ENCODE measurements at regions of chr4 and their contacts with region 1.

Region 1: GRCh38 chr4:74874753-74875367 is 58.1 kb upstream of the PARM1 start:
- DNase-seq: peak; percentile 79
- ATAC-seq: peak; percentile 80
- H3K4me3 ChIP-seq: no peak overlapping the region
- H3K4me3 Mint-ChIP-seq: no peak overlapping the region
- H3K27ac ChIP-seq: no peak overlapping the region
- H3K27ac Mint-ChIP-seq: no peak overlapping the region
- H3K4me1 ChIP-seq: peaks cover 5 to 14% of the 10 kb centered on the region in 2 donors
- H3K4me1 Mint-ChIP-seq: peaks cover 16% of the 10 kb centered on the region
- H3K27me3 ChIP-seq: no peaks in the 10 kb centered on the region
- H3K27me3 Mint-ChIP-seq: peaks cover 12% of the 10 kb centered on the region
- CTCF ChIP-seq: peak; percentile 94

Region 2: DNA sequence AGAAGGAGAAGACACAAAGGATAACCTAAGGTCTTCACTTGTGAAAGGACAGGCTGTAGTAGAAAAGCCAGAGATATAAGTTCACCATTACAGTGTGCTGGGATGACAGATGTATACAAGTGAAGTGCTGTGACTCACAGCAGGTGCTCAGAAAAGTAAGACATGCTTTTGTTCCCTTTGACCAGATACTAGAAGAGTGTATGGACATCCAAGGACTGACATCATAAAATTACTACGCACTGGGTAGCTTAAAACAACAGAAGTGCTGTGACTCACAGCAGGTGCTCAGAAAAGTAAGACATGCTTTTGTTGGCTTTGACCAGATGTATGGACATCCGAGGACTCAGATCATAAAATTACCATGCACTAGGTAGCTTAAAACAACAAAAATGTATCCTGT is 19.0 kb before region 1 on chr4:
- CTCF ChIA-PET with region 1: interaction called, 14 read pairs
- POLR2A ChIA-PET with region 1: no interaction called
- intact Hi-C with region 1: no loop called
- DNase-seq: no peak
- ATAC-seq: no peak
- H3K4me3 ChIP-seq: no peak overlapping the region
- H3K4me3 Mint-ChIP-seq: no peak overlapping the region
- H3K27ac ChIP-seq: no peak overlapping the region
- H3K27ac Mint-ChIP-seq: no peak overlapping the region
- H3K4me1 ChIP-seq: no peaks in the 10 kb centered on the region
- H3K4me1 Mint-ChIP-seq: no peaks in the 10 kb centered on the region
- H3K27me3 ChIP-seq: no peaks in the 10 kb centered on the region
- H3K27me3 Mint-ChIP-seq: peaks cover 15% of the 10 kb centered on the region
- CTCF ChIP-seq: no peak

Region 3: DNA sequence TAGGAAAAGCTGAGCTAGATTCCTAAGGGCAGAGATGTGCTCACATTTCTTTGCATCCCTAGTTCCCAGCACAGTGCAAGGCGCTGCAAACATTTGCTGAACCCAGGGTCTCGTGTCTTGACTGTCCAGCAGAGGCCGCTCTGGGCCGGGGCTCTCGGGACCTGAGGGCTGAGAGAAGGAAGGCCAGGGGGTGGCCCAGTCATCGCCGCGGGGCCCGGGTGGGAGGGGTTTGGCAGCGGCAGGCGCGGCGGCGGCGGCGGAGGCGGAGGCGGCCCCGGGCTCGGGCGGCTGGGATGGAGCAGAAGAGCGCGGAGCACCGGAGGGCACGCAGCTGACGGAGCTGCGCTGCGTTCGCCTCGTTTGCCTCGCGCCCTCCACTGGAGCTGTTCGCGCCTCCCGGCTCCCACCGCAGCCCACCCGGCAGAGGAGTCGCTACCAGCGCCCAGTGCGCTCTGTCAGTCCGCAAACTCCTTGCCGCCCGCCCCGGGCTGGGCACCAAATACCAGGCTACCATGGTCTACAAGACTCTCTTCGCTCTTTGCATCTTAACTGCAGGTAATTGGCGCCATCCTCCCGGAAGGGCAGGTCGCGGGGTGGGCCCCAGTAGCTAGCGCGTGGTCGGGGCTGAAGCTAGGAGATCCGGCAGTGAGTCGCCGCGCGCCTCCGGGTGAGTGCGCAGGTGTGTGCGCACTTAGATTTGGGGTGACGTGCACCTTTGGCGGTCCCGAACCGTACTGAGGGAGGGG is 58.1 kb after region 1 on chr4 and contains the start of gene PARM1:
- CTCF ChIA-PET with region 1: interaction called, 16 read pairs
- POLR2A ChIA-PET with region 1: no interaction called
- intact Hi-C with region 1: loop called (anchors 2 kb)
- DNase-seq: peak; percentile 87
- ATAC-seq: peak; percentile 84
- H3K4me3 ChIP-seq: peak within 1 kb of the TSS; percentile 12 to 88 (median 73)
- H3K4me3 Mint-ChIP-seq: peak within 1 kb of the TSS; percentile 98
- H3K27ac ChIP-seq: peak within 1 kb of the TSS; percentile 64 to 70
- H3K27ac Mint-ChIP-seq: peak within 1 kb of the TSS; percentile 95
- H3K4me1 ChIP-seq: peaks cover 27 to 42% of the 10 kb centered on the region in 2 donors
- H3K4me1 Mint-ChIP-seq: peaks cover 37% of the 10 kb centered on the region
- H3K27me3 ChIP-seq: peaks cover 0 to 24% (median 11%) of the 10 kb centered on the region in 4 experiments
- H3K27me3 Mint-ChIP-seq: peaks cover 2% of the 10 kb centered on the region
- CTCF ChIP-seq: peak; percentile 68
- total RNA-seq, gene PARM1: 6.6 and 7.8 TPM in 2 replicates

Region 4: DNA sequence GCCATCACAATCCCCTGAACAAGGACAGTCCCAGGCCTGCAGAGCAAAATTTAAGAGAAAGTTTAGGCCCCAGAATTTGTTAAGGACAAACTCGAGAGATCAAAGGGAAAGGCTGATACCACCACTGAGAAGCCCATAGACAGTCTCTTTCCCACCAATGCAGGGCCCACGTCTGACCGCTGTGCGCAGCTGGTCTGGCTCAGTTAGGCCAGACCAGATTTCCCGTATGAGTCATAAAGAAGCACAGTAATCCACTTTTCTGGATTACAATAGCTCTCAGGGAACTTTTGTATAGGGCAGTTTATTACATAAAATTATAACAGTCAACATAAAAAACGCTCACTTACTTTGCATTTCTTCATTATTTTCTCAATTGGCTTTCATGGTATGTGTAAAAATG is 379.9 kb after region 1 on chr4:
- CTCF ChIA-PET with region 1: no interaction called
- POLR2A ChIA-PET with region 1: no interaction called
- intact Hi-C with region 1: no loop called
- DNase-seq: no peak
- ATAC-seq: no peak
- H3K4me3 ChIP-seq: no peak overlapping the region
- H3K4me3 Mint-ChIP-seq: no peak overlapping the region
- H3K27ac ChIP-seq: no peak overlapping the region
- H3K27ac Mint-ChIP-seq: no peak overlapping the region
- H3K4me1 ChIP-seq: peaks cover 17 to 22% of the 10 kb centered on the region in 2 donors
- H3K4me1 Mint-ChIP-seq: peaks cover 22% of the 10 kb centered on the region
- H3K27me3 ChIP-seq: peaks cover 0 to 9% (median 5%) of the 10 kb centered on the region in 4 experiments
- H3K27me3 Mint-ChIP-seq: peaks cover 20% of the 10 kb centered on the region
- CTCF ChIP-seq: no peak

Region 5: GRCh38 chr4:75289914-75290582 is 415.2 kb after region 1 on chr4:
- CTCF ChIA-PET with region 1: interaction called, 100 read pairs
- POLR2A ChIA-PET with region 1: no interaction called
- intact Hi-C with region 1: loop called (anchors 1 kb)
- DNase-seq: peak; percentile 58
- ATAC-seq: no peak
- H3K4me3 ChIP-seq: no peak overlapping the region
- H3K4me3 Mint-ChIP-seq: no peak overlapping the region
- H3K27ac ChIP-seq: no peak overlapping the region
- H3K27ac Mint-ChIP-seq: no peak overlapping the region
- H3K4me1 ChIP-seq: no peaks in the 10 kb centered on the region
- H3K4me1 Mint-ChIP-seq: peaks cover 5% of the 10 kb centered on the region
- H3K27me3 ChIP-seq: no peaks in the 10 kb centered on the region
- H3K27me3 Mint-ChIP-seq: peaks cover 5% of the 10 kb centered on the region
- CTCF ChIP-seq: peak; percentile 50

Region 6: DNA sequence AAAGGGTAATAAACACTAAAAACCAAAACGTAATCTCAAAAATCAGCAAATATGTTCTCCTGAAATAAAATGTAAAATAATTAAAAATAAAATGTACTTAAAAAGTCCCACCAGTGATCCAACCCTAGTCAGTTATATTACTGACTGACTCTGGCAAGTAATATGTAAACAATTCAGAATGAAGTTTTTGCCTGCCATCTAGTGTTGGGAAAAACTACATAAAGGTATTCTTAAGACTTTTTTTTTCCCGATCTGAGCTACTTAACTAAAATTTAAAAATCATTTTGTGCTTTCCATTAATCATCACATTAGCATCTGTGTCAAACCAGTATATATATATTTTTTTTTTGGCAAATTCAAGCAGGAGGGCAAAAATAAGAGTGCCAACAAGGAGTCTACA is 615.3 kb after region 1 on chr4:
- CTCF ChIA-PET with region 1: interaction called, 19 read pairs
- POLR2A ChIA-PET with region 1: no interaction called
- intact Hi-C with region 1: loop called (anchors 1 kb)
- DNase-seq: peak; percentile 20
- ATAC-seq: no peak
- H3K4me3 ChIP-seq: no peak overlapping the region
- H3K4me3 Mint-ChIP-seq: no peak overlapping the region
- H3K27ac ChIP-seq: no peak overlapping the region
- H3K27ac Mint-ChIP-seq: no peak overlapping the region
- H3K4me1 ChIP-seq: no peaks in the 10 kb centered on the region
- H3K4me1 Mint-ChIP-seq: no peaks in the 10 kb centered on the region
- H3K27me3 ChIP-seq: no peaks in the 10 kb centered on the region
- H3K27me3 Mint-ChIP-seq: no peaks in the 10 kb centered on the region
- CTCF ChIP-seq: peak; percentile 22

Region 7: DNA sequence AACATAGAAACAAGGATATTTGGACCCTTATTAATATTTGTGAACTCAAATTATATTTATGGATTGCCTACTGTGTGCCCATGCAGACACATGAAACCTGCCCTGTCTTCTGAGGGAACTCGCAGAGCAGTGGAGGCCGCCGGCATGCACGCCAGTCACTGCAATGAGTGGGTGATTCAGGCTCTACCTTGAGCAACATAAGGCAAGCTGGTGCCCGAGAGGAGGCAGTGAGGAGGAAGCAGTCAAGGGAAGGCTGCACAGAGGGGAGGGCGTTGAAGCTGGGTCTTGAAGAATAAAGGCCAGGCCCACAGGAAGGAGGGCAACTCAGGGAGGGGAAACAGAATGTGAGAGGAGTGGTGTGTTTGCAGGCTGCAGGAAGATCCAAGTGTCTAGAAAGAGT is 974.6 kb after region 1 on chr4:
- CTCF ChIA-PET with region 1: interaction called, 13 read pairs
- POLR2A ChIA-PET with region 1: no interaction called
- intact Hi-C with region 1: loop called (anchors 10 kb)
- DNase-seq: no peak
- ATAC-seq: no peak
- H3K4me3 ChIP-seq: no peak overlapping the region
- H3K4me3 Mint-ChIP-seq: no peak overlapping the region
- H3K27ac ChIP-seq: no peak overlapping the region
- H3K27ac Mint-ChIP-seq: no peak overlapping the region
- H3K4me1 ChIP-seq: no peaks in the 10 kb centered on the region
- H3K4me1 Mint-ChIP-seq: peaks cover 6% of the 10 kb centered on the region
- H3K27me3 ChIP-seq: peaks cover 0 to 3% (median 0%) of the 10 kb centered on the region in 4 experiments
- H3K27me3 Mint-ChIP-seq: peaks cover 12% of the 10 kb centered on the region
- CTCF ChIP-seq: no peak